CD8-positive, alpha-beta T cell (primary cell): ENCODE measurements at regions of chr3 and their contacts with region 1.

Region 1: GRCh38 chr3:58008140-58009025 is at the start of gene FLNB:
- DNase-seq: peak; percentile 62 to 87 (median 74)
- ATAC-seq: peak; percentile 86
- H3K4me3 ChIP-seq: peak within 1 kb of the TSS; percentile 85 to 97
- H3K4me3 Mint-ChIP-seq: peak within 1 kb of the TSS; percentile 86
- H3K27ac ChIP-seq: peak within 1 kb of the TSS; percentile 46 to 72
- H3K27ac Mint-ChIP-seq: peak within 1 kb of the TSS; percentile 84
- H3K4me1 ChIP-seq: peaks cover 40% of the 10 kb centered on the region
- H3K4me1 Mint-ChIP-seq: peaks cover 38% of the 10 kb centered on the region
- H3K27me3 ChIP-seq: no peaks in the 10 kb centered on the region
- H3K27me3 Mint-ChIP-seq: no peaks in the 10 kb centered on the region
- CTCF ChIP-seq: peak; percentile 77
- total RNA-seq, gene FLNB: 46.8 to 52.1 TPM

Region 2: GRCh38 chr3:57805674-57806073 is 202.7 kb before region 1 on chr3:
- CTCF ChIA-PET with region 1: no interaction called
- POLR2A ChIA-PET with region 1: no interaction called
- intact Hi-C with region 1: no loop called
- DNase-seq: no peak
- ATAC-seq: peak; percentile 56
- H3K4me3 ChIP-seq: no peak overlapping the region
- H3K4me3 Mint-ChIP-seq: no peak overlapping the region
- H3K27ac ChIP-seq: no peak overlapping the region
- H3K27ac Mint-ChIP-seq: no peak overlapping the region
- H3K4me1 ChIP-seq: peaks cover 27% of the 10 kb centered on the region
- H3K4me1 Mint-ChIP-seq: peaks cover 75% of the 10 kb centered on the region
- H3K27me3 ChIP-seq: no peaks in the 10 kb centered on the region
- H3K27me3 Mint-ChIP-seq: no peaks in the 10 kb centered on the region
- CTCF ChIP-seq: no peak

Region 3: DNA sequence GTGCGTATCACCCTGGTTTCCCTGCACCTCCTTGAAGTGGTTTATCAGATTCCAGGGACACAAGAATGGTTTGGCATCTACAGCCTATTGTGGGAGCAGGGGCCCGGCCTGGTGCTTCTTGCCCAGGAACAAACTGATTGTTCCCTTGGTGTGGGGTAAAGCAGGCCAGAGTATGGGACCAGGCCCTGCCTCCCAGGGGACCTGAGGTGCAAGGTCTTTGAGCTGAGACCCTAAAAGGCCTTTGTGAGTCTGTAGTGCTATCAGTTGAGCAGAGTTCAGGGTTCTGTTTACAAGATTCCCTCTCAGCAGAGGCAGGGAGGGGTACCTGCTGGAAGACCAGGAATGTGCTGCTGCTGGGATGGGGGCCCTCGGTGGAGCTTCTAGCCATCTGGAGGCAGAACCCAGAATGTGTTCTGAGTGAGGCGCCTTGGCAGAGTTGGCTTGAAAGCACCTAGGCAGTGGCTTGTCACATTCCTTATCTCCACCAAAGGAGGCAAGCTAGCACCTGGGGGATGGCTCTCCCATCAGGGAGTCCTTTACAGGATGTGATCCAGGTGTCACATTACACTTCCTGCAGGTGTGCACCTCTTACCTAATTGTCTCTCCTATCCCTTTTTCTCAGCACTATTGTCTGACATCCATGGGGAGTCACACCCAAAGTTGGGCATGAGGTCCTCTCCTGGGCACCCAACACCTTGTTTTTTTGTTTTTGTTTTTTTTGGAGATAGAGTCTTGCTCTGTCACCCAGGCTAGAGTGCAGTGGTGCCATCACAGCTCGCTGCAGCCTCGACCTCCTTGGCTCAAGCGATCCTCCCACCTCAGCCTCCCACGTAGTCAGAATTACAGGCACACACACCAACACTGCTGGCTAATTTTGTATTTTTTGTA is 12.9 kb after region 1 on chr3:
- CTCF ChIA-PET with region 1: interaction called, 12 read pairs
- POLR2A ChIA-PET with region 1: interaction called, 4 read pairs
- intact Hi-C with region 1: no loop called
- DNase-seq: no peak
- ATAC-seq: no peak
- H3K4me3 ChIP-seq: no peak overlapping the region
- H3K4me3 Mint-ChIP-seq: no peak overlapping the region
- H3K27ac ChIP-seq: no peak overlapping the region
- H3K27ac Mint-ChIP-seq: no peak overlapping the region
- H3K4me1 ChIP-seq: peaks cover 25% of the 10 kb centered on the region
- H3K4me1 Mint-ChIP-seq: peaks cover 53% of the 10 kb centered on the region
- H3K27me3 ChIP-seq: no peaks in the 10 kb centered on the region
- H3K27me3 Mint-ChIP-seq: no peaks in the 10 kb centered on the region
- CTCF ChIP-seq: no peak

Region 4: GRCh38 chr3:58082047-58082446 is 73.7 kb after region 1 on chr3:
- CTCF ChIA-PET with region 1: interaction called, 16 read pairs
- POLR2A ChIA-PET with region 1: interaction called, 7 read pairs
- intact Hi-C with region 1: loop called (anchors 5 kb)
- DNase-seq: peak in 8 of 9 experiments; percentile 6 to 73 (median 26)
- ATAC-seq: peak; percentile 88
- H3K4me3 ChIP-seq: peak overlapping the region in 1 of 2 experiments; percentile 20
- H3K4me3 Mint-ChIP-seq: peak overlapping the region; percentile 66
- H3K27ac ChIP-seq: peak overlapping the region; percentile 22 to 32
- H3K27ac Mint-ChIP-seq: peak overlapping the region; percentile 92
- H3K4me1 ChIP-seq: peaks cover 65% of the 10 kb centered on the region
- H3K4me1 Mint-ChIP-seq: peaks cover 60% of the 10 kb centered on the region
- H3K27me3 ChIP-seq: no peaks in the 10 kb centered on the region
- H3K27me3 Mint-ChIP-seq: no peaks in the 10 kb centered on the region
- CTCF ChIP-seq: no peak

Region 5: DNA sequence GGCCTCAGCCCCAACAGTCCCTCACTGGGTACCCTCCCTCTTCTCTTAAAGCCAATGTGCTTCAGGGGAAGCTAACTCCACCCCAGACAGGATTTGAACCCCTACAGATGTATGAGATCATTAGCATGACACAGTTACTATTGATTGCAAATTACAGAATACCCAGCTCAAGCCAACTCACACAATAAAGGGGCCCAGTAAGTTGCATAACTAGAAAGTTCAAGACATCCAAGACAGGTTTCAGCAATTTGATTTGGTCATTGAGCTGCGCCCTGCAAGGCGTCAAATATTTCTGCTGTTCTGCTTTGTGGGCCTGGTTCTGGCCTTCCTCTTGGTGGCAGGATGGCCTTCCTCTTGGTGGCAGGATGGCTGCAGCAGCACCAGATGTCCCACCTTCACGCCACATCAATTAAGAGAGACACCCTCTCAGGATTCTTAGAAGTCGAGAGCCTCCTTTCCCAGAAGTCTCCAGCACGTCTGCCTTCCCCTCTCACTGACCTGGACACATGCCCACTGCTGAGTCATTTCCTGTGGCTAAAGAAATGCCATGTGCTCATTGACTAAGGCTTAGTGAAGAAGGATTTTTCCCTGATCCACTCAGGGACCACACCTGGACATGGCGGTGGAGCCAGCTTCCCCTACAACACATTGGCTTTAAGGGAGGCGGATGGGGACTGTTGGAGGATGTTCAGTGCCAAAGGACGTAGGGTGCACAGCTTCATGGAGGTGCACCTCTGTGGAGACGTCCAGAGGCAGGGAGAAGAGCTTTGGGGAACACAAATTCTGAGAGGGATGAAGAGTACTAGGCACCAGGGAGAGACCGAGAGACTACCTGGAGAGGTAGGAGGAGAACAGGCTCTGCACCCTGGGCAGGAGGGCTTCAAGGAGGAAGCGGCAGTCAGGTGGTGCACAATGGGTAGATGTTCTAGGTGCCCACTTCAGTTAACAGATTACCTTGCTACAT is 153.3 kb after region 1 on chr3:
- CTCF ChIA-PET with region 1: interaction called, 22 read pairs
- POLR2A ChIA-PET with region 1: interaction called, 3 read pairs
- intact Hi-C with region 1: no loop called
- DNase-seq: no peak
- ATAC-seq: no peak
- H3K4me3 ChIP-seq: no peak overlapping the region
- H3K4me3 Mint-ChIP-seq: no peak overlapping the region
- H3K27ac ChIP-seq: no peak overlapping the region
- H3K27ac Mint-ChIP-seq: no peak overlapping the region
- H3K4me1 ChIP-seq: no peaks in the 10 kb centered on the region
- H3K4me1 Mint-ChIP-seq: no peaks in the 10 kb centered on the region
- H3K27me3 ChIP-seq: no peaks in the 10 kb centered on the region
- H3K27me3 Mint-ChIP-seq: no peaks in the 10 kb centered on the region
- CTCF ChIP-seq: no peak

Region 6: GRCh38 chr3:58217209-58217811 is 208.9 kb after region 1 on chr3:
- CTCF ChIA-PET with region 1: interaction called, 50 read pairs
- POLR2A ChIA-PET with region 1: no interaction called
- intact Hi-C with region 1: loop called (anchors 1 kb)
- DNase-seq: peak; percentile 16 to 80 (median 55)
- ATAC-seq: peak; percentile 90
- H3K4me3 ChIP-seq: no peak overlapping the region
- H3K4me3 Mint-ChIP-seq: peak overlapping the region; percentile 16
- H3K27ac ChIP-seq: no peak overlapping the region
- H3K27ac Mint-ChIP-seq: no peak overlapping the region
- H3K4me1 ChIP-seq: peaks cover 4% of the 10 kb centered on the region
- H3K4me1 Mint-ChIP-seq: peaks cover 7% of the 10 kb centered on the region
- H3K27me3 ChIP-seq: no peaks in the 10 kb centered on the region
- H3K27me3 Mint-ChIP-seq: no peaks in the 10 kb centered on the region
- CTCF ChIP-seq: peak; percentile 78

Region 7: DNA sequence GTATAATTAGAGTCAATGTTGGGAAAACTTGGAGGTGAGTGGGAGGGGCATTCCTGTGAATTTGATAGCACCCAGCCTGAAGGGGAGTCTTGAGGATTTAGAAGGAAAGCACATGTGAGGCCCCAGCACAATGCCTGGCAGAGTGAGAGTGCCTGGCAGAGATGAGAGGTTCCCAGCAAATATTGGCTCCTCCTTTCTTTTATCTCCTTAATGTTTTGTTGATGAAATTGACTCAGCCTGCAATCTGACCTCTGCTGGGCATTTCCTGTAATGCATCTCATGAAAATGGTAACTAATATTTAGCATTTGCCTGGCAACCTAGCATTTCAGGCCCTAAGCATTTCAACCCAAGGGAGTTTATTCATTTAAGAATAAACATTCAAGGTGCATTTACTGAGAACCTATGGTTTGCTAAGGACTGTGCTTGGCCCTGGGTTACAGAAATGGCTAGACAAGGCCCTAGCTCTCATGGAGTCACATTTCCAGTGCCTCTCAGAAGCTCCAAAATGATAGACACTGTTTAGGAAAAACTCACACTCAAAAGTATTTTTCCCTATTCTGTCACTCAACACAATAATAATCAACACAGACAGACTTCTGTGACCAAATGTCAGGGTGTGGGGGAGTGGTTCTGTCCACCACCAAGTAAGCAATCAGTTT is 406.3 kb after region 1 on chr3:
- CTCF ChIA-PET with region 1: interaction called, 3 read pairs
- POLR2A ChIA-PET with region 1: no interaction called
- intact Hi-C with region 1: loop called in 1 of 2 experiments (anchors 10 kb)
- DNase-seq: peak in 6 of 9 experiments; percentile 23 to 72 (median 42)
- ATAC-seq: peak; percentile 91
- H3K4me3 ChIP-seq: no peak overlapping the region
- H3K4me3 Mint-ChIP-seq: no peak overlapping the region
- H3K27ac ChIP-seq: no peak overlapping the region
- H3K27ac Mint-ChIP-seq: no peak overlapping the region
- H3K4me1 ChIP-seq: no peaks in the 10 kb centered on the region
- H3K4me1 Mint-ChIP-seq: no peaks in the 10 kb centered on the region
- H3K27me3 ChIP-seq: no peaks in the 10 kb centered on the region
- H3K27me3 Mint-ChIP-seq: no peaks in the 10 kb centered on the region
- CTCF ChIP-seq: peak; percentile 60